ENCODE measurements at regions of chr7 and their contacts with region 1.

Region 1: GRCh38 chr7:30564243-30564892 is 30.3 kb upstream of the GARS1 start:
- DNase-seq: peak; percentile 60 to 83 (median 76)
- ATAC-seq: peak; percentile 95
- H3K4me3 ChIP-seq: no peak overlapping the region
- H3K4me3 Mint-ChIP-seq: no peak overlapping the region
- H3K27ac ChIP-seq: no peak overlapping the region
- H3K27ac Mint-ChIP-seq: peak overlapping the region; percentile 37
- H3K4me1 ChIP-seq: no peaks in the 10 kb centered on the region
- H3K4me1 Mint-ChIP-seq: no peaks in the 10 kb centered on the region
- H3K27me3 ChIP-seq: no peaks in the 10 kb centered on the region
- H3K27me3 Mint-ChIP-seq: no peaks in the 10 kb centered on the region
- CTCF ChIP-seq: peak; percentile 74

Region 2: DNA sequence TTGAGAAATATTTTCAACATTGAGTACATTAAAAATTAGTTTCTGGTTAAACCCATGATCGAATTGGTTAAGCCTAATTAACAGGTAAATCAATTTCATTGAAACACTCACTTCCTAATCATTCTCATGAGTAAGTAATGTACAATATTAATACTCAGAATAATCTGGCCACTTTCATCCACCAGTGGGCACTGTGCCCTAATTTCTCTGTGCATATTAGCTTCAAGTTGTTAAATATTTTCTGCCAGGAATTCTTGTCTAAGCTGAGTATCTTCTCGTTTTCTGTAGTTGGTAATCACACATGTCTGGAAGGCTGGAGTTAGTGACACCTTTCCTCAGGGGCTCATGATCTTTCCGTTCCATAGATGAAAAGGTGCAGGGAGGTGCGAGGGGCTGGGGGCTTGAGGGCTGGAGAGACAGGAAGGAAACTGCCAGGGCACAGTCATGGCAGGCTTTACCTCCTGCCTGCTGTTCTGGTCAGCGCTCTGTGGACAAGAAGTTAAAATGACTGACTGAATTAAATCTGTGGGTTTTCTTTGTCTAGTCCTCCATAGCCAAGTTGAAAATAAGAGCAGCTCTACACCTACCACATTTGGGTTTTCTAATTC is 686.2 kb before region 1 on chr7:
- CTCF ChIA-PET with region 1: no interaction called
- POLR2A ChIA-PET with region 1: no interaction called
- intact Hi-C with region 1: loop called (anchors 1 to 5 kb)
- DNase-seq: peak in 5 of 9 experiments; percentile 26 to 49 (median 35)
- ATAC-seq: peak; percentile 36
- H3K4me3 ChIP-seq: no peak overlapping the region
- H3K4me3 Mint-ChIP-seq: no peak overlapping the region
- H3K27ac ChIP-seq: no peak overlapping the region
- H3K27ac Mint-ChIP-seq: no peak overlapping the region
- H3K4me1 ChIP-seq: peaks cover 11% of the 10 kb centered on the region
- H3K4me1 Mint-ChIP-seq: peaks cover 5% of the 10 kb centered on the region
- H3K27me3 ChIP-seq: no peaks in the 10 kb centered on the region
- H3K27me3 Mint-ChIP-seq: peaks cover 8% of the 10 kb centered on the region
- CTCF ChIP-seq: peak; percentile 48

Region 3: GRCh38 chr7:30062591-30062990 is 501.8 kb before region 1 on chr7:
- CTCF ChIA-PET with region 1: interaction called, 7 read pairs
- POLR2A ChIA-PET with region 1: no interaction called
- intact Hi-C with region 1: loop called (anchors 5 kb)
- DNase-seq: peak in 2 of 9 experiments; percentile 33 to 51
- ATAC-seq: peak; percentile 49
- H3K4me3 ChIP-seq: no peak overlapping the region
- H3K4me3 Mint-ChIP-seq: no peak overlapping the region
- H3K27ac ChIP-seq: no peak overlapping the region
- H3K27ac Mint-ChIP-seq: no peak overlapping the region
- H3K4me1 ChIP-seq: no peaks in the 10 kb centered on the region
- H3K4me1 Mint-ChIP-seq: peaks cover 7% of the 10 kb centered on the region
- H3K27me3 ChIP-seq: no peaks in the 10 kb centered on the region
- H3K27me3 Mint-ChIP-seq: no peaks in the 10 kb centered on the region
- CTCF ChIP-seq: peak; percentile 60

Region 4: GRCh38 chr7:30276203-30276900 is 288.0 kb before region 1 on chr7:
- CTCF ChIA-PET with region 1: interaction called, 80 read pairs
- POLR2A ChIA-PET with region 1: no interaction called
- intact Hi-C with region 1: loop called (anchors 1 kb)
- DNase-seq: peak; percentile 10 to 77 (median 55)
- ATAC-seq: peak; percentile 86
- H3K4me3 ChIP-seq: no peak overlapping the region
- H3K4me3 Mint-ChIP-seq: no peak overlapping the region
- H3K27ac ChIP-seq: no peak overlapping the region
- H3K27ac Mint-ChIP-seq: no peak overlapping the region
- H3K4me1 ChIP-seq: no peaks in the 10 kb centered on the region
- H3K4me1 Mint-ChIP-seq: peaks cover 9% of the 10 kb centered on the region
- H3K27me3 ChIP-seq: no peaks in the 10 kb centered on the region
- H3K27me3 Mint-ChIP-seq: no peaks in the 10 kb centered on the region
- CTCF ChIP-seq: peak; percentile 69

Region 5: GRCh38 chr7:30366606-30367005 is 197.8 kb before region 1 on chr7:
- CTCF ChIA-PET with region 1: no interaction called
- POLR2A ChIA-PET with region 1: no interaction called
- intact Hi-C with region 1: no loop called
- DNase-seq: no peak
- ATAC-seq: no peak
- H3K4me3 ChIP-seq: no peak overlapping the region
- H3K4me3 Mint-ChIP-seq: no peak overlapping the region
- H3K27ac ChIP-seq: no peak overlapping the region
- H3K27ac Mint-ChIP-seq: no peak overlapping the region
- H3K4me1 ChIP-seq: no peaks in the 10 kb centered on the region
- H3K4me1 Mint-ChIP-seq: no peaks in the 10 kb centered on the region
- H3K27me3 ChIP-seq: no peaks in the 10 kb centered on the region
- H3K27me3 Mint-ChIP-seq: no peaks in the 10 kb centered on the region
- CTCF ChIP-seq: no peak

Region 6: GRCh38 chr7:30493228-30493627 is 71.1 kb before region 1 on chr7:
- CTCF ChIA-PET with region 1: no interaction called
- POLR2A ChIA-PET with region 1: no interaction called
- intact Hi-C with region 1: no loop called
- DNase-seq: no peak
- ATAC-seq: no peak
- H3K4me3 ChIP-seq: no peak overlapping the region
- H3K4me3 Mint-ChIP-seq: no peak overlapping the region
- H3K27ac ChIP-seq: no peak overlapping the region
- H3K27ac Mint-ChIP-seq: no peak overlapping the region
- H3K4me1 ChIP-seq: no peaks in the 10 kb centered on the region
- H3K4me1 Mint-ChIP-seq: no peaks in the 10 kb centered on the region
- H3K27me3 ChIP-seq: no peaks in the 10 kb centered on the region
- H3K27me3 Mint-ChIP-seq: no peaks in the 10 kb centered on the region
- CTCF ChIP-seq: no peak

Region 7: GRCh38 chr7:30510124-30511075 is 54.0 kb before region 1 on chr7:
- CTCF ChIA-PET with region 1: interaction called, 13 read pairs
- POLR2A ChIA-PET with region 1: no interaction called
- intact Hi-C with region 1: loop called (anchors 1 kb)
- DNase-seq: peak in 6 of 9 experiments; percentile 9 to 58 (median 36)
- ATAC-seq: peak; percentile 75
- H3K4me3 ChIP-seq: no peak overlapping the region
- H3K4me3 Mint-ChIP-seq: no peak overlapping the region
- H3K27ac ChIP-seq: no peak overlapping the region
- H3K27ac Mint-ChIP-seq: no peak overlapping the region
- H3K4me1 ChIP-seq: peaks cover 2% of the 10 kb centered on the region
- H3K4me1 Mint-ChIP-seq: peaks cover 3% of the 10 kb centered on the region
- H3K27me3 ChIP-seq: no peaks in the 10 kb centered on the region
- H3K27me3 Mint-ChIP-seq: no peaks in the 10 kb centered on the region
- CTCF ChIP-seq: peak; percentile 91

Region 8: GRCh38 chr7:30584965-30585364 is 20.6 kb after region 1 on chr7:
- CTCF ChIA-PET with region 1: interaction called, 10 read pairs
- POLR2A ChIA-PET with region 1: no interaction called
- intact Hi-C with region 1: no loop called
- DNase-seq: no peak
- ATAC-seq: no peak
- H3K4me3 ChIP-seq: no peak overlapping the region
- H3K4me3 Mint-ChIP-seq: no peak overlapping the region
- H3K27ac ChIP-seq: no peak overlapping the region
- H3K27ac Mint-ChIP-seq: no peak overlapping the region
- H3K4me1 ChIP-seq: no peaks in the 10 kb centered on the region
- H3K4me1 Mint-ChIP-seq: peaks cover 14% of the 10 kb centered on the region
- H3K27me3 ChIP-seq: no peaks in the 10 kb centered on the region
- H3K27me3 Mint-ChIP-seq: no peaks in the 10 kb centered on the region
- CTCF ChIP-seq: no peak

Measured in CD8-positive, alpha-beta T cell (primary cell).